ENCODE measurements at regions of chr3 and their contacts with region 1.

Region 1: GRCh38 chr3:121545574-121546455 is at the start of gene POLQ:
- DNase-seq: peak; percentile 96
- H3K4me3 Mint-ChIP-seq: peak within 1 kb of the TSS; percentile 75
- H3K27ac Mint-ChIP-seq: peak within 1 kb of the TSS; percentile 82
- H3K4me1 Mint-ChIP-seq: peaks cover 16% of the 10 kb centered on the region
- H3K27me3 Mint-ChIP-seq: no peaks in the 10 kb centered on the region
- CTCF ChIP-seq: no peak
- total RNA-seq, gene POLQ: 4.1 and 5.8 TPM in 2 replicates

Region 2: GRCh38 chr3:121529308-121529707 is 16.5 kb before region 1 on chr3:
- CTCF ChIA-PET with region 1: interaction called, 11 read pairs
- POLR2A ChIA-PET with region 1: interaction called, 3 read pairs
- intact Hi-C with region 1: no loop called
- DNase-seq: no peak
- H3K4me3 Mint-ChIP-seq: no peak overlapping the region
- H3K27ac Mint-ChIP-seq: no peak overlapping the region
- H3K4me1 Mint-ChIP-seq: peaks cover 8% of the 10 kb centered on the region
- H3K27me3 Mint-ChIP-seq: no peaks in the 10 kb centered on the region
- CTCF ChIP-seq: peak; percentile 28

Region 3: DNA sequence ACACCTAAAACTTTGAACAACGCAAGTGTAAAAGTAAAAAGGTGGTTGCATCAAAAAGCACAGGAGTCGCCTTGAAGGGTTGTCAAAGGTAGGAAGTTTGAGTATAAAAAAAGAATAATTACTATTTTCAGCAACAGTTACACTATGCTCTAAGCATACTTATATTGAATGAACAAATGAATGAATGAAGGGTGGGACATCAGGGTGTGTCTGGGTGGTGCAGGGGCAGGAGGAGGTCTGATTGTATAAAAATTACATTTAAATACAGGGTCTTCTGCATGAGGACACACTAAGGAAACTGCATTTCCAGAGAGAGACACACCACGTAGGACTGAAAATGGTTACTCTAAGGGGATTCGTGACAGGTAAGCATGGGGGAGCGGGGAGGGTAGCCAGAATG is 21.8 kb after region 1 on chr3 and contains the start of gene ARGFX:
- CTCF ChIA-PET with region 1: no interaction called
- POLR2A ChIA-PET with region 1: no interaction called
- intact Hi-C with region 1: no loop called
- DNase-seq: no peak
- H3K4me3 Mint-ChIP-seq: no peak within 1 kb of the TSS
- H3K27ac Mint-ChIP-seq: no peak within 1 kb of the TSS
- H3K4me1 Mint-ChIP-seq: peaks cover 5% of the 10 kb centered on the region
- H3K27me3 Mint-ChIP-seq: no peaks in the 10 kb centered on the region
- CTCF ChIP-seq: no peak
- total RNA-seq, gene ARGFX: not detected in 2 replicates

Region 4: DNA sequence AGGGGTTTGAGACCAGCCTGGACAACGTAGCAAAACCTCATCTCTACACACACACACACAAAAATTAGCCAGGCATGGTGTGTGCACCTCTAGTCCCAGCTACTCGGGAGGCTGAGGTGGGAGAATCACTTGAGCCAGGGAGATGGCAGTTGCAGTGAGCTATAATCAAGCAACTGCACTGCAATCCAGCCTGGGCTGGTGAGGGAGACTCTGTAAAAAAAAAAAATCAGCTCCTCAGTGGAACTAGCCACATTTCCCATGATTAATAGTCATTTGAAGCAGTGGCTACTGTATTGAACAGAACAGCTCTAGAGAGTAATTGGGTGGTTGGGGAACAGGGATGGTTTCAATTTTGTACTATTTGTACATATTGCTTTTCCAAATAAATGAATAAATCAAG is 35.9 kb after region 1 on chr3:
- CTCF ChIA-PET with region 1: interaction called, 12 read pairs
- POLR2A ChIA-PET with region 1: no interaction called
- intact Hi-C with region 1: no loop called
- DNase-seq: no peak
- H3K4me3 Mint-ChIP-seq: no peak overlapping the region
- H3K27ac Mint-ChIP-seq: no peak overlapping the region
- H3K4me1 Mint-ChIP-seq: peaks cover 4% of the 10 kb centered on the region
- H3K27me3 Mint-ChIP-seq: peaks cover 17% of the 10 kb centered on the region
- CTCF ChIP-seq: no peak

Region 5: DNA sequence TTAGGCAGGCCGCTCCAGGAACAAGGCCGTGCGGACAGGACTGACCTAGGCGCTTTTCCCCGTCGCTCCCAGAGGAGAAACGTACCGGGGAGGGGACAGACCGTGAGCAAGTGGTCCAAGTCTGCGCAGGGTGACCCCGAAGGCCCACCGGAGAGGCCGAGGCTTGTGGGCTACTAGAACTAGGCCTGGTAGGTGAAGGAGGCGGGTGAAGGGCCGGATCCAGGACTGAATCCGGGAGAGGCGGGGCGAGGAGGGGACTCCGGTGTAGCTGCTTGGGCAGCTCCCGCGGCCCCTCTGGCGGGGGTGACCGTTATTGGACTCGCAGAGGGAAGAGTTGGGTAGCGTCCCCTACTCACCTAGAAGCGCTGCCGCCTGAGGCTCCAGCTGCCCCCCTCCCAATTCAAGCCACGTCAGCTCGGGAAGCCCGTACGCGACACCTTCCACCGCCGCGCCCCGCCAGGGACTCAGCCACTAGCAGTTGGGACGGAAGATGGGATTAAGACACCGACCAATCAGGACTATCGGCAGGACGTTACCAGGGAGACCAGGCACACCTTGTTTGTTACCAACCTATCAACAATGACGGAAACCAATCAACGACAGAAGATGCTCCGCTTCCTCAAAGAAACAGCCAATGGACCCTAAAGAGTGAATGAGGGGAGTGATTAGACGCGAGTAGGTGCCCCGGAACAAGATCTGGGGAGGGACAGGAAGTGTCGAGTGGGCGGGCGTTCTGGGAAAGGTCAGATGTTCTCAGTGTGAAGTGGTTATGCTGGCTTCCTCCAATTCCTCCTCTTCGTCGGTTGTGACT is 203.7 kb after region 1 on chr3 and contains the start of gene GOLGB1:
- CTCF ChIA-PET with region 1: interaction called, 4 read pairs
- POLR2A ChIA-PET with region 1: interaction called, 14 read pairs
- intact Hi-C with region 1: no loop called
- DNase-seq: peak; percentile 100
- H3K4me3 Mint-ChIP-seq: no peak within 1 kb of the TSS
- H3K27ac Mint-ChIP-seq: no peak within 1 kb of the TSS
- H3K4me1 Mint-ChIP-seq: peaks cover 11% of the 10 kb centered on the region
- H3K27me3 Mint-ChIP-seq: peaks cover 18% of the 10 kb centered on the region
- CTCF ChIP-seq: no peak
- total RNA-seq, gene GOLGB1: 62.4 and 66.9 TPM in 2 replicates

Region 6: DNA sequence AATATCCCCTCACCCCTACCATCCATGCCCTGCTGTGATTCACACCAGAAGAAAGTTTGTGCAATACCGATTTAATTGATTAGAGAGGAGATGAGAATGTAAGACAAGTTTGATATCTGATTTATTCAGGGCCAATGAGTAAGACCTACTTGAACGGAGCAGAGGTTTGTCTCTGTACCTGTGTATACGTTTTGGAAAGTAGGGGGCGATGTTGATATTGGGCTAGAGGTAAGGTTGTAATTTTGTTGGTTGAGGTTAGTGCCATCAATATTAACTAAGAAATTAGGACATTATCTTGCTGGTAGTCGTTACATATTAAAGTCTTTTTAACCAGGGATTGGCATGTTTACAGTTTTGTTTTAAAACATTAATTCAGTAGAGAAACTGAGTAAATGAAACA is 309.7 kb after region 1 on chr3:
- CTCF ChIA-PET with region 1: no interaction called
- POLR2A ChIA-PET with region 1: no interaction called
- intact Hi-C with region 1: loop called (anchors 1 kb)
- DNase-seq: peak; percentile 37
- H3K4me3 Mint-ChIP-seq: no peak overlapping the region
- H3K27ac Mint-ChIP-seq: no peak overlapping the region
- H3K4me1 Mint-ChIP-seq: peaks cover 8% of the 10 kb centered on the region
- H3K27me3 Mint-ChIP-seq: no peaks in the 10 kb centered on the region
- CTCF ChIP-seq: peak; percentile 16

Region 7: DNA sequence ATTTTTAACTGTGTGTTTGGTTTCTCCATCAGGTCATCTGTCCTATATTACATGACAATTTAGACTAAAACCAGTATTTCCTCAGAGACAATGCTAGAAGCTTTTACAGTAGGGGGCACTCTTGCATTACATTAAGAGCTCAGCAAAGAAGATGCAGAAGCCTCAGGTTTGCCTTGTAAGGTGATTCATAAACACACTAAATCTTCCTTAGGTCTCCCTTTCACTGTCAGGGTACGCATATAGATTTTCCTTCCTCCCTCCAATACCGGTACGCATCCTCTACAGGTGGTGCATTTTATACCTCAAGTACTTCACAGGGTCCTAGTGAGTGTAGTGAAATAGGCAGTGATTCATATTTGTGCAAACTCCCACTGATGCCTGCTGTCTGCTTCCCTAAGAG is 555.8 kb after region 1 on chr3:
- CTCF ChIA-PET with region 1: interaction called, 12 read pairs
- POLR2A ChIA-PET with region 1: interaction called, 4 read pairs
- intact Hi-C with region 1: loop called (anchors 2 kb)
- DNase-seq: peak; percentile 76
- H3K4me3 Mint-ChIP-seq: no peak overlapping the region
- H3K27ac Mint-ChIP-seq: no peak overlapping the region
- H3K4me1 Mint-ChIP-seq: no peaks in the 10 kb centered on the region
- H3K27me3 Mint-ChIP-seq: no peaks in the 10 kb centered on the region
- CTCF ChIP-seq: peak; percentile 74

Region 8: DNA sequence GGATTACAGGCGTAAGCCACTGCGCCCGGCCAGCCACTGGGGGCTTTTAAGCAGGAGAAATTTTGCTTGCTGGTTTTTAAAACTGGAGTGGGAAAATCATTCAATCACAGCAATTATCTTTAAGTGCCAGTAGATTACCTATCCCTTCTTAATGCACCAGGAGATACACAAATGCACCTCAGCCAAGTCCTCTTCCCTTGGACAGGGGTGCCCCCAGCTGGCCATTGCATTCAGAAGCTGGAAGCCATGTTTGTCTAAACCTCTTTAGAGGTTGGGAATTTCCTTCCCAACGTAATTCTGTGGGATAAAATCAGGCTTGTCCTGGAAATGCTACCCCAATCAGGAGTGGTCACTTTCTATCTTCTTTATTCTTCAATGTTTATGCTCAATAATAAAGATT is 810.6 kb after region 1 on chr3:
- CTCF ChIA-PET with region 1: interaction called, 5 read pairs
- POLR2A ChIA-PET with region 1: no interaction called
- intact Hi-C with region 1: loop called (anchors 1 kb)
- DNase-seq: peak; percentile 81
- H3K4me3 Mint-ChIP-seq: no peak overlapping the region
- H3K27ac Mint-ChIP-seq: no peak overlapping the region
- H3K4me1 Mint-ChIP-seq: peaks cover 26% of the 10 kb centered on the region
- H3K27me3 Mint-ChIP-seq: no peaks in the 10 kb centered on the region
- CTCF ChIP-seq: peak; percentile 50

Measured in MCF 10A (cell line).